Common myeloid progenitor, CD34-positive (primary cell): ENCODE measurements at regions of chr9 and their contacts with region 1.

Region 1: GRCh38 chr9:91164724-91165520 is 196.8 kb downstream of the AUH start:
- DNase-seq: peak; percentile 96 to 99 (median 98)
- H3K4me3 ChIP-seq: peak overlapping the region in 1 of 7 experiments; percentile 25
- H3K27ac ChIP-seq: peak overlapping the region in 1 of 2 experiments; percentile 28
- H3K4me1 ChIP-seq: peaks cover 17 to 56% (median 47%) of the 10 kb centered on the region in 4 experiments
- H3K27me3 ChIP-seq: no peaks in the 10 kb centered on the region

Region 2: DNA sequence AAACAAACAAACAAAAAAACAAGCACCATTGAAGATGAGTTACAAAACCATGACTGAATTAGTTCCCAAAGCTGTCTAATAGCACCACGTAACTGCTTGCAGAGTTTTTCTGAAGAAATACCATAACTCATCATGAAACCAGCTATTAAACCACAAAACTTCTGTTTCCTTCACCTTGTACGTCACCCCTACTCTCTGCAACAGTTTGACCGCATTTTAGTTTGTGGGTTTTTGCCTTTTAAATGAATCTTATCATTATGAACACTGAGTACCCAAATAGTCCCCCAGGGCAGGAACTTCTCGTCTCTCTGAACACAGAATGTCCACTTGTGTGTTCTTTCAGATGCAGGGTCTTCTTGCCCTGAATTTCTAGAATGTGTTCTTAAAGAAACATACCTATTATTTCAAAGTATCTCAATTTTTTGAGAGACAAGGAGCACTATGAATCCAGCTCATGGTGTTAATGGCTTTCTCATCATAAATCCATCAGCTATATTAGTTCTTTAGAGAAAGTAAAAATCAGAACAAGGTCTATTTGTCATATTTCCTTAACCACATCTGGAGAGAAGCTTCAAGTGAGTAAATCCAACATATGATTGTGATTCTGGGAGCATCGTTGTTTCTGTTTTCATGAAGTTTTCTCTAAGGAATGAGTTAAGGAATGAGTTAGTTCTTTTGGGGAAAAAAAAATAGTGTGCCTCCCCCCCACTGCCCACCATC is 13.8 kb before region 1 on chr9:
- CTCF ChIA-PET with region 1: interaction called, 22 read pairs
- POLR2A ChIA-PET with region 1: interaction called, 18 read pairs
- DNase-seq: peak; percentile 97 to 99 (median 99)
- H3K4me3 ChIP-seq: peak overlapping the region in 4 of 7 experiments; percentile 4 to 46 (median 16)
- H3K27ac ChIP-seq: peak overlapping the region; percentile 41 to 75
- H3K4me1 ChIP-seq: peaks cover 22 to 46% (median 39%) of the 10 kb centered on the region in 4 experiments
- H3K27me3 ChIP-seq: no peaks in the 10 kb centered on the region

Region 3: DNA sequence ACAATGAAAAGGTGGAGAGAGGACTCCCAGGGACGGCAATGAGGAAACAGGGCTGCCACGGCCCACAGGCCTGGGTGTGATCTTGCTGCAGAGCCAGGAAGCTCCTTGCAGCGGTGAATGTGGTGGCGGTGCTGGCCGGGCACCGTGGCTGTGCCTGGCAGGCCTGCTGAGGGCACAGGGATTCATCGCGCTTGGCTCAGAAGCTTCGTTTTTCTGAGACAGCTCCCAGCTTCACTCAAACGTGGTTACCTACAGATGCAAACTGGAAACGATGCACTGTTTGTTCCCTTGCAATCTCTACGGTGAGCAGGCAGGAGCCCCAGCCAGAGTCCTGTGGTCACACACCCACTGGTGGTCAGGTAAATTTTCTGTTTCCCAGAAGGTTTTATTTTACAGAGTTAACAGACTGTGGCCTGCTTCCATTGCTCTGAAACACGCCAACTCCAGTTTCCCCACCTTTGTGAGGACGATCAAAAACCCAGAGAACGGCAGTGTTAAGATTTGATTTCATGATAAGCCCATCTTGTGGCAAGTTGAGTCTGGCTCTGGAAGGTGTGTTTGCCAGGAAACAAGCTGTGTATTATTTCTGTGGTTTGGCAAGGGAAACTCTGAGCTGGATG is 12.8 kb after region 1 on chr9:
- CTCF ChIA-PET with region 1: interaction called, 11 read pairs
- POLR2A ChIA-PET with region 1: interaction called, 3 read pairs
- DNase-seq: peak; percentile 34 to 89 (median 84)
- H3K4me3 ChIP-seq: peak overlapping the region in 1 of 7 experiments; percentile 33
- H3K27ac ChIP-seq: no peak overlapping the region
- H3K4me1 ChIP-seq: peaks cover 14 to 25% (median 22%) of the 10 kb centered on the region in 4 experiments
- H3K27me3 ChIP-seq: no peaks in the 10 kb centered on the region

Region 4: DNA sequence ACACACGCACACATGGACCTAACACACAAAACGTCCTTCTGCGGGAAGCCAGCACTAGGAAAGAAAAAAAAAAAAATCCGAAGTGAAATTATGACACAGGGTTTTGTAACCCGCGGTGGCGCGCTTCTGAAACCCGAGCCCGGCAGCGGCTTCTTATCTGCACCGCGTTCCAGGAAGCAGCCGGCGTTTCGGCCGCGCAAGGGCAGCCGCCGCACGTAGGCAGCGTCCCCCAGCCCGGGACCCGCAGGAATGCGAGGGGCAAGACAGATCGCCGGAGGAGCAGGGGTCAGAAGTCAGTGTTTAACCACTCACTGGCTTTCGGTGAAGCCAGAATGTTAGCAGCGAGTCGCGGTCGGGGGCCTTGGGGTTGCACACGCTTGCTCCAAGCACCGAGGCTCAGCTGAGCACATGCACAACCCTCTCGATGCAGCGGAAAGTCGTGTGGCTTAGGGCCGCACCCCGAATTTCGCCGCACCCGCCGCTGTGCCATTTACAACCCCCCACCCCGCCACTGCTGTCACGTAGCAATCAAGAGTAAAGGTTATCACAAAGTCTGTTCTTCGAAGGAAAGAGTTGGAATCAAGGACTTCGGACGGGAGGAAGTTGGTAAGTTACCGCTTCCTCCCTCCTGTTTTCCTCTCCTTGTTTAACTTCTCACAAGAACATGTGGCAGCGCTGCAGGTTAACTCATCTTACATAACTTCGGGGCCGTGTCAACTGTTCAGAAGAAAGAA is 28.9 kb after region 1 on chr9:
- CTCF ChIA-PET with region 1: interaction called, 17 read pairs
- POLR2A ChIA-PET with region 1: interaction called, 5 read pairs
- DNase-seq: peak; percentile 96 to 98 (median 97)
- H3K4me3 ChIP-seq: peak overlapping the region in 6 of 7 experiments; percentile 42 to 72 (median 58)
- H3K27ac ChIP-seq: peak overlapping the region; percentile 97 to 98
- H3K4me1 ChIP-seq: peaks cover 5 to 56% (median 49%) of the 10 kb centered on the region in 4 experiments
- H3K27me3 ChIP-seq: no peaks in the 10 kb centered on the region